ENCODE measurements at regions of chr11 and their contacts with region 1.

Region 1: DNA sequence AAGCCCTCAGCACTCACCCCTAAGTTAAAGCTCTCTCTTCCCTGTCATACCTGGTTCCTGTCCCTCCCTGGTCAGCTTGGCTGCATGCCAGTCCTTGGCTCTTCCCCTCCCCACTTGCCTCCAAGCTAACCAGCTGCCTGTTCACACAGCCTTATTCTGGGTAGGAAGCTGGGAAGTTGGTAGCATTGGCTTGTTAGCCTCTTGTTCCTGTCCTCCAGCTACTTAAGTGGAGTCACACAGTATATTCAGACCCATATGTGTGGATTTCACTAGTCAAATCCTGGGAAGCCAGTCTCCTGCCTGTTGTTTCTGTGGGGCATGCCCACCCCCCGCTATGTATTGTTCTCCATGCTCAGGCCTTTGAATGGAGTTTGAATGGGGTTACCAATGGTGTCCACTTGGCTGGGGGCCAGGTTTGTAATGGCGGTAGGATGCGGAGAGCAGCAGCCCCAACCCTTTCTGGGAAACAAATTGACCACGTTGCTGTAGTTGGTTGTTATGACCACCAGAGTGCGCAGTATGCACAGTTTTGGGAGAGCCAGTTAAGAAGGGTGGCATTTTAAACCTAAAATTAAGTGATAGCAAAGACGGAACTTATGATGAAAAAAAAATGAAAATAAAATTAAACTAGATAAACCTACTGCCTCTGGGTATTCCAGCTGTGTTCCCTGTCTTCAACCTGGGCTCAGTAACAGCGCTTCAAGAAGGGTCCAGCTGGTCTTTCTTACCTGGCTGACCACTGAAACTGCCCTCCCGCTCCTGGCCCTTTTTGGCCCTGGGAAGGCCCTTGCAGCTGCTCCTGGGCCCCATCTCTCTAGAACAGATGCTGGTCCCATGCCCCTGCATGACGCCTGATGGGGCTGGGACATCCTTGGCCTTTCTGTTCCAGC is 10.7 kb upstream of the RPS3 start:
- DNase-seq: peak; percentile 82
- ATAC-seq: peak; percentile 90
- H3K4me3 ChIP-seq: no peak overlapping the region
- H3K4me3 Mint-ChIP-seq: no peak overlapping the region
- H3K27ac ChIP-seq: no peak overlapping the region
- H3K27ac Mint-ChIP-seq: no peak overlapping the region
- H3K4me1 ChIP-seq: peaks cover 4 to 6% of the 10 kb centered on the region in 2 donors
- H3K4me1 Mint-ChIP-seq: peaks cover 2% of the 10 kb centered on the region
- H3K27me3 ChIP-seq: peaks cover 0 to 10% (median 3%) of the 10 kb centered on the region in 4 experiments
- H3K27me3 Mint-ChIP-seq: peaks cover 17% of the 10 kb centered on the region
- CTCF ChIP-seq: peak; percentile 83

Region 2: DNA sequence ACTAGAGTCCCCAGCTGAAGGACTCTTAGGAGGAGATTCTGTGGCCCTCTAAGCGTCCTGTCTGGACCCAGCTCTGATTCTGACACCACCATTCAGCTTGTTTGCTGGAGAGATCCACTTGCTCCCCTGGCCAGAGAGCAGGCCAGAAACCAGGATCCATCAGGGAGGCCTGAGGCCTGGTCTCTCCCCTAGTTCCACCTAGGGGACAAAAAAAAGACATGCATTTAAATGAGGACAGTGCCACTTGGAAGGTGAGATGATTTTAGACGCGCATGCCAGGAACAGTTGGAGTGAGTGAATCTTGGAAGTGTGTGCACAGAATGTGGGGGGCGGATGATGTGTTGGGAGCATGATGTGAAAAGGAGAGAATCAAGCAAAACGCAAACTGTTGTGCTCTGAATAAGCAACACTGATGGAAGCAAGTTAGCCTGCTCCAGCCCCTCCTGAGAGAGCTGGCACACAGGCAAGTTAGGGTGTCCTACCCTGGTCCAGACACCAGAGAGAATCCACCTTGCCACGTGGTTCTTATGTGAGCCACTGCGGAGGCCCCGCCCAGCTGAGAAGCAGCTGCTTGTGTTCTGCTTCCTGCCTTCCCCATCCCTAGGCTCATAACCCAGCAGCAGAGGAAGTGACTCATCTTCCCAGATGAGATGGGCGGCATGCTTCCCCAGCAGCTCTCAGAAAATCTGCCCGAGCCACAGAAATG is 245.8 kb before region 1 on chr11:
- CTCF ChIA-PET with region 1: interaction called, 4 read pairs
- POLR2A ChIA-PET with region 1: no interaction called
- intact Hi-C with region 1: loop called (anchors 5 kb)
- DNase-seq: peak; percentile 38
- ATAC-seq: peak; percentile 58
- H3K4me3 ChIP-seq: no peak overlapping the region
- H3K4me3 Mint-ChIP-seq: peak overlapping the region; percentile 8
- H3K27ac ChIP-seq: no peak overlapping the region
- H3K27ac Mint-ChIP-seq: no peak overlapping the region
- H3K4me1 ChIP-seq: peaks cover 8 to 19% of the 10 kb centered on the region in 2 donors
- H3K4me1 Mint-ChIP-seq: peaks cover 20% of the 10 kb centered on the region
- H3K27me3 ChIP-seq: peaks cover 0 to 3% (median 0%) of the 10 kb centered on the region in 4 experiments
- H3K27me3 Mint-ChIP-seq: peaks cover 19% of the 10 kb centered on the region
- CTCF ChIP-seq: no peak

Region 3: DNA sequence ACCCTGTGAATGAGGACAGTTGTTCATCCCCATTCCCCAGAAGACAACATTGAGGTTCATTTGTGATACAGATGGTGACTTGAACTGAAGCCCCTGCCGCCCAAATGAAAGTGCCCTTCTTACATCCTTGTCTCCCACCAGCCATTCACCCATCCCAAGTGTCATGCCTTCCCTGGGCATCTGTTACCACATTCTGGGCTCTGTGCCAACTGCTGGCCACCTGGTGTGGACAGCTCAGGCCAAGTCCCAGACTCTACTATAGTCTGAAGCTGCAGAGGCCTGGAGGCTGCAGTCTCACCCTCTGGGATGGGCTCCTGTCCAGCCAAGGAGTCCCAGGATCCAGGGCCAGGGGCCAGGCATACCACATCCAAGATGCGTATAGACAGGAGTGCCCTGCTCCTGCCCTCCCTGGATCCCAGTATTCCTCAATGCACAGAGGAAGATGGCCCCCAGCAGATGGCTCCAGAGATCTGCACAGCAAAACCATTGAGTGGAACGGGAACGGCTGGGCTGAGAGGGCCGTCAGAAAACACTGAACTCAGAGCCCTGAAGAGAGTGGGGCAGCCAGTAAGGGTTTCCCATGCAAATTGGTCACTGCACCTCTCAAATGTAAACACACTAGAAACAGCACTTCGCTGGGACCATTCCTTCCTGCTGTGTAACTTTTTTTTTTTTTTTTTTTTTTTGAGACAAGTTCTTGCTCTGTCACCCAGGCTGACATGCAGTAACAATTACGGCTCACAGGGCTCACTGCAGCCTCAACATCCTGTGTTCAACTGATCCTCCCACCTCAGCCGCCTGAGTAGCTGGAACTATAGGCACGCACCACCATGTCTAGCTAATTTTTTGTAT is 60.0 kb before region 1 on chr11:
- CTCF ChIA-PET with region 1: interaction called, 10 read pairs
- POLR2A ChIA-PET with region 1: no interaction called
- intact Hi-C with region 1: loop called (anchors 1 kb)
- DNase-seq: peak; percentile 20
- ATAC-seq: no peak
- H3K4me3 ChIP-seq: no peak overlapping the region
- H3K4me3 Mint-ChIP-seq: no peak overlapping the region
- H3K27ac ChIP-seq: no peak overlapping the region
- H3K27ac Mint-ChIP-seq: no peak overlapping the region
- H3K4me1 ChIP-seq: peaks cover 6 to 8% of the 10 kb centered on the region in 2 donors
- H3K4me1 Mint-ChIP-seq: peaks cover 6% of the 10 kb centered on the region
- H3K27me3 ChIP-seq: no peaks in the 10 kb centered on the region
- H3K27me3 Mint-ChIP-seq: peaks cover 13% of the 10 kb centered on the region
- CTCF ChIP-seq: no peak

Region 4: DNA sequence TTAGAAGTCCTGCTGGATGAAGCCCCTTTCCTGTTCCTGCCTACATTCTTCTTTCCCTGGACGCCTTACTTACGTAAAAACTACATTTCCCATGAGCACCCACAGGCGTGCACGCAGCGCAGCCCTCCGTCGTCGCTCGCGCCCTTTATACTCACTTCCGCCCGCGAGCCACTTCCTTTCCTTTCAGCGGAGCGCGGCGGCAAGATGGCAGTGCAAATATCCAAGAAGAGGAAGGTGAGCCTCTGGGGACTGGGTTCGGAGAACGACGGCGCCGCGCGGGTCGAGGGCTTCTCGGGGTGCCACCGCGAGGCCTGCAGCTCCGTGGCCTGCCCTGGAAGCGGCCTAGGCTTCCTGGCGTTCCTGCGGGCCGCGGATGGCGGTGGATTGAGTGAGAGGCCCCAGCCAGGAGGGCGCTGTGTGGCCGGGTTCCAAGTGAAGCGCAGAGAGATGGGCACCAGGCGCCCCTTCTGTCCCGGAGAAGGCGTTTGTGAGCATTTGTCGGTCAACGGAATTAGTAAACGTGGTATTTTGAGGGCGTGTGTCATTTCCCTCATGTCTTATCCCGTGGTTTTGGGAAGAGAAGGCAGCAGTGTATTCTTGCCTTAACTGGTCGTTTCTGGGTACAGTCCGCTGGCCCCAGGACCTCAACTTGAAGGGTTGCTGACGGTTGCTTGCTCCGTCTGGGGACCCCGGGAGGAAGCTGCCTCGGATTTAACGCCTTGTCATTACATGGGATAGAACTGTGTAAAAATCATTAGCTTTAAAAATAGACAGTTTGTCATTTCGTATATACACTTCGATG is 10.9 kb after region 1 on chr11 and contains the start of gene RPS3:
- CTCF ChIA-PET with region 1: interaction called, 11 read pairs
- POLR2A ChIA-PET with region 1: interaction called, 3 read pairs
- intact Hi-C with region 1: loop called (anchors 1 kb)
- DNase-seq: peak; percentile 94
- ATAC-seq: peak; percentile 94
- H3K4me3 ChIP-seq: peak within 1 kb of the TSS; percentile 71 to 96 (median 76)
- H3K4me3 Mint-ChIP-seq: peak within 1 kb of the TSS; percentile 88
- H3K27ac ChIP-seq: peak within 1 kb of the TSS; percentile 85 to 87
- H3K27ac Mint-ChIP-seq: peak within 1 kb of the TSS; percentile 95
- H3K4me1 ChIP-seq: peaks cover 20 to 29% of the 10 kb centered on the region in 2 donors
- H3K4me1 Mint-ChIP-seq: peaks cover 41% of the 10 kb centered on the region
- H3K27me3 ChIP-seq: no peaks in the 10 kb centered on the region
- H3K27me3 Mint-ChIP-seq: peaks cover 7% of the 10 kb centered on the region
- CTCF ChIP-seq: peak; percentile 29
- total RNA-seq, gene RPS3: 3,554 and 3,642 TPM in 2 replicates

Region 5: GRCh38 chr11:75445315-75445953 is 56.8 kb after region 1 on chr11:
- CTCF ChIA-PET with region 1: interaction called, 12 read pairs
- POLR2A ChIA-PET with region 1: no interaction called
- intact Hi-C with region 1: loop called (anchors 1 kb)
- DNase-seq: peak; percentile 77
- ATAC-seq: peak; percentile 88
- H3K4me3 ChIP-seq: no peak overlapping the region
- H3K4me3 Mint-ChIP-seq: no peak overlapping the region
- H3K27ac ChIP-seq: no peak overlapping the region
- H3K27ac Mint-ChIP-seq: no peak overlapping the region
- H3K4me1 ChIP-seq: no peaks in the 10 kb centered on the region
- H3K4me1 Mint-ChIP-seq: no peaks in the 10 kb centered on the region
- H3K27me3 ChIP-seq: peaks cover 0 to 3% (median 0%) of the 10 kb centered on the region in 4 experiments
- H3K27me3 Mint-ChIP-seq: peaks cover 3% of the 10 kb centered on the region
- CTCF ChIP-seq: peak; percentile 99

Region 6: GRCh38 chr11:75468534-75469340 is 80.1 kb after region 1 on chr11:
- CTCF ChIA-PET with region 1: no interaction called
- POLR2A ChIA-PET with region 1: no interaction called
- intact Hi-C with region 1: no loop called
- DNase-seq: no peak
- ATAC-seq: no peak
- H3K4me3 ChIP-seq: no peak overlapping the region
- H3K4me3 Mint-ChIP-seq: no peak overlapping the region
- H3K27ac ChIP-seq: no peak overlapping the region
- H3K27ac Mint-ChIP-seq: no peak overlapping the region
- H3K4me1 ChIP-seq: peaks cover 3 to 8% of the 10 kb centered on the region in 2 donors
- H3K4me1 Mint-ChIP-seq: peaks cover 11% of the 10 kb centered on the region
- H3K27me3 ChIP-seq: no peaks in the 10 kb centered on the region
- H3K27me3 Mint-ChIP-seq: no peaks in the 10 kb centered on the region
- CTCF ChIP-seq: no peak